ENCODE measurements at regions of chr15 and their contacts with region 1.

Region 1: DNA sequence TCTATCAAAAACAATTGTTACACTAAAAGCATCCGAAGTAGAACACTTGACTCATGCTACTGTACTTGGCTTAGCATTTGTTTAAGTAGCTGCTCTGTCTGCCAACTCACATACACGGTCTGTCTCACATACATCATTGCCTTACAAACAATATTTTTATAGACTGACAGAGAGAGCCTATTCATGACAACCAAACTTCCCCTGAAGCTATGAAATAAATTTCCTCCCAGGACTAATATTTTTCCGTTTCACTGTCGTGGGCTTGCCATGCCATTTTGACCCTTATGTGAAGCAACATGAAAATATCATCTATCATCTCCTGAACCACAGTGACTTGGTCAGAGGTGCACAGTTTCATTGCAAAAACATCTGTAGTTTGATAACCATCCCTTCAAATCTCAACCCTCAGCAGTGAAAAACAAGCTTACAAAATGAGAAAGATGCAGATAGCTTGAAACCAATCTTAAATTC is 66.5 kb upstream of the PYGO1 start:
- DNase-seq: no peak
- H3K4me3 ChIP-seq: no peak overlapping the region
- H3K27ac ChIP-seq: no peak overlapping the region
- H3K4me1 ChIP-seq: no peaks in the 10 kb centered on the region
- H3K27me3 ChIP-seq: no peaks in the 10 kb centered on the region
- CTCF ChIP-seq: no peak
- POLR2A ChIP-seq: no peak

Region 2: GRCh38 chr15:55858661-55859060 is 204.1 kb after region 1 on chr15:
- intact Hi-C with region 1: loop called (anchors 10 kb)
- DNase-seq: no peak
- H3K4me3 ChIP-seq: no peak overlapping the region
- H3K27ac ChIP-seq: no peak overlapping the region
- H3K4me1 ChIP-seq: no peaks in the 10 kb centered on the region
- H3K27me3 ChIP-seq: no peaks in the 10 kb centered on the region
- CTCF ChIP-seq: no peak
- POLR2A ChIP-seq: no peak

Region 3: GRCh38 chr15:56052395-56053045 is 397.9 kb after region 1 on chr15:
- intact Hi-C with region 1: no loop called
- DNase-seq: no peak
- H3K4me3 ChIP-seq: no peak overlapping the region
- H3K27ac ChIP-seq: no peak overlapping the region
- H3K4me1 ChIP-seq: peaks cover 5% of the 10 kb centered on the region
- H3K27me3 ChIP-seq: no peaks in the 10 kb centered on the region
- CTCF ChIP-seq: peak; percentile 33 to 74 (median 57)
- POLR2A ChIP-seq: no peak